GM12878 (cell line): ENCODE measurements at regions of chr3 and their contacts with region 1.

Region 1: GRCh38 chr3:151168269-151169094 is 34.5 kb downstream of the GPR171 start:
- DNase-seq: no peak
- ATAC-seq: peak; percentile 81
- H3K4me3 ChIP-seq: no peak overlapping the region
- H3K27ac ChIP-seq: no peak overlapping the region
- H3K4me1 ChIP-seq: peaks cover 21% of the 10 kb centered on the region
- H3K27me3 ChIP-seq: no peaks in the 10 kb centered on the region
- CTCF ChIP-seq: peak; percentile 78 to 92 (median 87)
- EP300 ChIP-seq: no peak
- POLR2A ChIP-seq: no peak
- RAD21 ChIP-seq: peak; percentile 90

Region 2: GRCh38 chr3:150787741-150788370 is 380.6 kb before region 1 on chr3:
- CTCF ChIA-PET with region 1: no interaction called
- POLR2A ChIA-PET with region 1: no interaction called
- RAD21 ChIA-PET with region 1: no interaction called
- SMC1A ChIA-PET with region 1: no interaction called
- in situ Hi-C with region 1: no loop called
- intact Hi-C with region 1: no loop called
- DNase-seq: no peak
- ATAC-seq: peak; percentile 94
- H3K4me3 ChIP-seq: no peak overlapping the region
- H3K27ac ChIP-seq: no peak overlapping the region
- H3K4me1 ChIP-seq: peaks cover 2% of the 10 kb centered on the region; the same call in 1 of the 2 replicates
- H3K27me3 ChIP-seq: no peaks in the 10 kb centered on the region; a peak in 1 of 4 replicates
- CTCF ChIP-seq: peak; percentile 94 to 98 (median 97); a peak in 5 of 6 replicates
- EP300 ChIP-seq: no peak
- POLR2A ChIP-seq: no peak
- RAD21 ChIP-seq: peak; percentile 81

Region 3: GRCh38 chr3:151156618-151157216 is 11.8 kb before region 1 on chr3:
- CTCF ChIA-PET with region 1: interaction called, 22 read pairs
- POLR2A ChIA-PET with region 1: no interaction called
- RAD21 ChIA-PET with region 1: interaction called, 4 read pairs
- SMC1A ChIA-PET with region 1: interaction called, 4 read pairs
- in situ Hi-C with region 1: no loop called
- intact Hi-C with region 1: no loop called
- DNase-seq: no peak
- ATAC-seq: peak; percentile 96
- H3K4me3 ChIP-seq: no peak overlapping the region
- H3K27ac ChIP-seq: no peak overlapping the region
- H3K4me1 ChIP-seq: no peaks in the 10 kb centered on the region
- H3K27me3 ChIP-seq: no peaks in the 10 kb centered on the region
- CTCF ChIP-seq: peak; percentile 57 to 72 (median 60)
- EP300 ChIP-seq: no peak
- POLR2A ChIP-seq: no peak
- RAD21 ChIP-seq: peak; percentile 35

Region 4: DNA sequence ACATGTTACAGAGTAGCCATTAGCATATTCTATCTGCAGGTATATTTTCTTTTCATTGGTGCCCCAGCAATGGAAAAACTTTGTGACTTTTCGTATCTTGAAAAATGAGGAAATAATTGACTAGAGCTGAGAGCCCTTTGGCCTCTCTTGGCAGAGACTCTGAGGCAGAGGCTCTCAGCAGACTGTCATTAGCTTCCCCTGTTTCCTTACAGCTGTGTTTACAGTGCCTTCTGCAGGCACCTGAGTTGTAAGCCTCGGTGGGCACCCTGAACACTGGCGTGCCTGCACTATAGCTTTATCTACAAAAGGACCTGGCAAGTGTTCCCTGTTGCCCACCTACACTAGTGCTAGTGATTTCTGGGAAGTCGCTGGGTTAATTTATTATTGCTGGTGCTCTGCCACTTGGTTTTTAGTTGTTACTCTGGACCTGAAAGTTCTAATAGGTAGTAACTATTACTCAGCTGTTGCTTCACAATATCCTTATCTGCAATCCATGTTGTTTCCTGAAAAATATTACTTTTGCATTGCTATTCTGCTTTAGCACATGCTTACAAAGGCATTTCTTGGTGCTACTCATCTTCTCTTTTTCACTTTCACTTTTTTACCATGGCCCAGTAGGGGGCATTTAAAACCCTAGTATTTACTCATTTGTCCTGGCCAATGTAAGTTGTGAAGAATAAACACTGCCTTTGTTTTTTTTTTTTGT is 42.3 kb after region 1 on chr3:
- CTCF ChIA-PET with region 1: interaction called, 16 read pairs
- POLR2A ChIA-PET with region 1: interaction called, 3 read pairs
- RAD21 ChIA-PET with region 1: interaction called, 7 read pairs
- SMC1A ChIA-PET with region 1: interaction called, 23 read pairs
- in situ Hi-C with region 1: no loop called
- intact Hi-C with region 1: no loop called
- DNase-seq: no peak
- ATAC-seq: peak; percentile 88
- H3K4me3 ChIP-seq: no peak overlapping the region
- H3K27ac ChIP-seq: no peak overlapping the region
- H3K4me1 ChIP-seq: no peaks in the 10 kb centered on the region
- H3K27me3 ChIP-seq: no peaks in the 10 kb centered on the region
- CTCF ChIP-seq: 0 out of 6 replicates have a peak, but pooled peaks of 2 of the 3 experiments have one; percentile 13 to 25
- EP300 ChIP-seq: no peak
- POLR2A ChIP-seq: no peak
- RAD21 ChIP-seq: peak; percentile 14; the same call in 1 of the 2 replicates

Region 5: GRCh38 chr3:151276687-151277042 is 108.2 kb after region 1 on chr3:
- CTCF ChIA-PET with region 1: interaction called, 42 read pairs
- POLR2A ChIA-PET with region 1: no interaction called
- RAD21 ChIA-PET with region 1: interaction called, 23 read pairs
- SMC1A ChIA-PET with region 1: interaction called, 57 read pairs
- in situ Hi-C with region 1: loop called (anchors 5 kb)
- intact Hi-C with region 1: no loop called
- DNase-seq: no peak
- ATAC-seq: peak; percentile 87
- H3K4me3 ChIP-seq: no peak overlapping the region; the same call in 1 of the 2 replicates
- H3K27ac ChIP-seq: no peak overlapping the region
- H3K4me1 ChIP-seq: peaks cover 36% of the 10 kb centered on the region
- H3K27me3 ChIP-seq: no peaks in the 10 kb centered on the region
- CTCF ChIP-seq: no peak
- EP300 ChIP-seq: no peak
- POLR2A ChIP-seq: no peak
- RAD21 ChIP-seq: no peak

Region 6: DNA sequence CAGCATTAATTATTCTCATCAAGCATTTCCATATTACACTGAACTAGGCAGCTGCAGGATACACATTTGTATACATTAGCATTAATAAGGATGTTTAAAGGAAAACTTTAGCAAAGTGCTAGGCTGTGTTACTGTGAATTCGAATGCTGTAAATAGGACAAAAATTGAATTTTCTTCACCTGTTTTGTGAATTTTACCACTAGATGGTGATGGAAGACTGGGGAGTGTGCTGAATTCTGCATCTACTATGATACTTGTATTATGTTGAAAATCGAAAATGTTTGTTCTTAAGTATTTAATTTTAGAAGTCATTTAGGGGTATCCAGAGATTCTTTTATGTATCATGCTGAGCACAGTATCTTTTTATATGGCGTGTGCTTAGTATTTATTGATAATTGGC is 122.2 kb after region 1 on chr3:
- CTCF ChIA-PET with region 1: interaction called, 15 read pairs
- POLR2A ChIA-PET with region 1: no interaction called
- RAD21 ChIA-PET with region 1: no interaction called
- SMC1A ChIA-PET with region 1: interaction called, 17 read pairs
- in situ Hi-C with region 1: no loop called
- intact Hi-C with region 1: no loop called
- DNase-seq: no peak
- ATAC-seq: no peak
- H3K4me3 ChIP-seq: no peak overlapping the region
- H3K27ac ChIP-seq: no peak overlapping the region
- H3K4me1 ChIP-seq: no peaks in the 10 kb centered on the region
- H3K27me3 ChIP-seq: no peaks in the 10 kb centered on the region; a peak in 1 of 4 replicates
- CTCF ChIP-seq: peak in 2 of 3 experiments; percentile 5 to 41; a peak in 3 of 6 replicates
- EP300 ChIP-seq: no peak
- POLR2A ChIP-seq: no peak
- RAD21 ChIP-seq: peak; percentile 83

Region 7: GRCh38 chr3:151838583-151839312 is 670.3 kb after region 1 on chr3:
- CTCF ChIA-PET with region 1: interaction called, 7 read pairs
- POLR2A ChIA-PET with region 1: no interaction called
- RAD21 ChIA-PET with region 1: interaction called, 3 read pairs
- SMC1A ChIA-PET with region 1: interaction called, 4 read pairs
- in situ Hi-C with region 1: no loop called
- intact Hi-C with region 1: loop called (anchors 2 kb)
- DNase-seq: peak; percentile 2
- ATAC-seq: peak; percentile 87
- H3K4me3 ChIP-seq: no peak overlapping the region
- H3K27ac ChIP-seq: no peak overlapping the region
- H3K4me1 ChIP-seq: no peaks in the 10 kb centered on the region
- H3K27me3 ChIP-seq: no peaks in the 10 kb centered on the region
- CTCF ChIP-seq: peak; percentile 66 to 75 (median 73); a peak in 5 of 6 replicates
- EP300 ChIP-seq: no peak
- POLR2A ChIP-seq: no peak
- RAD21 ChIP-seq: peak; percentile 87